ENCODE measurements at regions of chr22 and their contacts with region 1.

Region 1: GRCh38 chr22:40714192-40714951 is 35.1 kb downstream of the MCHR1 start:
- DNase-seq: peak; percentile 62 to 98
- H3K4me3 ChIP-seq: no peak overlapping the region
- H3K27ac ChIP-seq: peak overlapping the region; percentile 38
- H3K4me1 ChIP-seq: peaks cover 56% of the 10 kb centered on the region
- H3K27me3 ChIP-seq: no peaks in the 10 kb centered on the region
- CTCF ChIP-seq: no peak

Region 2: DNA sequence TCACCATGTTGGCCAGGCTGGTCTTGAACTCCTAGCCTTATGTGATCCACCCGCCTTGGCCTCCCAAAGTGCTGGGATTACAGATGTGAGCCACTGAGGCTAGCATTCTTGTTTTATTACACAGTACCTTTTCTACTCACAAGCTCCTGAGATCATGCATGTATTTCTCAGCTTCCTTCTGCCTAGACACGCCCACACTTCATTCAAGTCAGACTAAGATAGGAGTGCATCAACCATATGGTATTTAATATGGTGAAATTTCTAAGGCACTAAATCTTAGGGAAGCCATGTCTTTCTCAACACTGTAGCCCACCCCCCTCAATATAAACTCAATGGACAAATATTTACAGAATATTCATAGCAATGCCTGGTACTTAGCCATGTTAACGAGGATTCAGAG is 42.7 kb after region 1 on chr22:
- CTCF ChIA-PET with region 1: interaction called, 18 read pairs
- POLR2A ChIA-PET with region 1: interaction called, 12 read pairs
- intact Hi-C with region 1: no loop called
- DNase-seq: peak in 1 of 2 experiments; percentile 57
- H3K4me3 ChIP-seq: no peak overlapping the region
- H3K27ac ChIP-seq: no peak overlapping the region
- H3K4me1 ChIP-seq: peaks cover 22% of the 10 kb centered on the region
- H3K27me3 ChIP-seq: no peaks in the 10 kb centered on the region
- CTCF ChIP-seq: no peak

Region 3: DNA sequence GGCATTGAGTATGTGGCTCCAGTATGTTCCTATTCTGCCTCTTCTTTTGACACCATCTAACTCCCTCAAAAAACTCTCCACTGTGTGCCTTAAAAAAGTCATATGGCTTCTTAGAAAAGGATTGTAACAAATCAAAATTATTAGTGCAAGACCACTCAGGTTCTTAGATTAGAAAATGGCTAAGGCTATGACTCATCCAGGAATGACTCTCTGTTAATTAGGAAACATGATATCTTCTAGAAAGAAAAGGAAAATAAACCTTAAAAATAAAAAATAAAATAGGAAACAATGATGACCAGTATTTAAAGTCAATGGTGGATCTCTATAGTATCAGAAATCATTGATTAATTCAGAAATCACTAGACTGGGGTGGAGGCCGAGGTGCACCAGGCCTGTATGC is 83.1 kb after region 1 on chr22:
- CTCF ChIA-PET with region 1: no interaction called
- POLR2A ChIA-PET with region 1: interaction called, 12 read pairs
- intact Hi-C with region 1: no loop called
- DNase-seq: no peak
- H3K4me3 ChIP-seq: no peak overlapping the region
- H3K27ac ChIP-seq: no peak overlapping the region
- H3K4me1 ChIP-seq: no peaks in the 10 kb centered on the region
- H3K27me3 ChIP-seq: no peaks in the 10 kb centered on the region
- CTCF ChIP-seq: no peak